ENCODE measurements at regions of chr4 and their contacts with region 1.

Region 1: DNA sequence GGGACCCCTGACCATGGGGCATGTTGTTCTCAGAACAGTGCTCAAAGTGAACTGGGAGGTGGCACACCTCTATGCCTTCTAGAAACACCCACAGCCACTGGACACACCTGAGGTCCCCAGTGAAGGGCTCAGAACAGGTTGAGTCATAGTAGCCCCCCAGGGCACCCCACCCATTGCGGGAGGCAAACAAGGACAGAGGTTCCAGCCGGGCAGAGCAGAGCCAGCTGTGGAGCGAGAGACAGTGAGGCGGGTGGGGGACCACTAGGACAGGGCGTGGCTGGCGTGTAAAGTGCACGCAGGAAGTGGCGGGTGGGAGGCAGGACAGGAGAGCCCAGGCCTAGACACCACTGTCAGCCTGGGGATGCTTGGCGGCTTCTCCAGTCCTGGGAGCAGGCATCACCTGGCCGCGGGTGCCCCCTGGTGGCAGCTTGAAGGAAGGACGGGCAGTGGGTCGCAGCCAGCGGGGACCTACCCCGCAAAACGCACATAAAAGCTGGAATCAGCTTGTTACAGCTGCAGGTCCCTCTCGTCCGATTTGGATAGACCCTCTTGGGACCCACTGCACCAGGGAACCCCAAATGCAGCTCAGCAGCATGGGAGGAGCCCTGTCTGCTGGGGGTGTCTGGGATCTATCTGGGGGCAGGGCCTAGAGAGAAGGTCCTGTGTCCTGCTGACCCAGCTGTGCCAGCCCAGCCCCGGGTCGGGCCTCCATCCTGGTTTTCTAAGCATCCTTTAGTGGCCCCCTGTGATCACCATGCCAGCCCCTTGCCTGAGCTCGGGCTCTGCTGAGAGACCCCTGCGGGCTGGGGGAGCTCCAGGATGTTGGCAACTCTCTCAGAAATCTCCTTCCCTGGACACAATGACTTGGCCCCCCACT is 57.6 kb downstream of the WFS1 start:
- DNase-seq: peak; percentile 94
- H3K4me3 ChIP-seq: peak overlapping the region in 1 of 2 experiments; percentile 55; a peak in 1 of 4 replicates
- H3K27ac ChIP-seq: no peak overlapping the region
- H3K4me1 ChIP-seq: peaks cover 0 to 3% of the 10 kb centered on the region in 2 experiments; a peak in 1 of 4 replicates
- H3K27me3 ChIP-seq: no peaks in the 10 kb centered on the region
- CTCF ChIP-seq: peak; percentile 81
- EP300 ChIP-seq: no peak
- RAD21 ChIP-seq: peak; percentile 99

Region 2: GRCh38 chr4:5955201-5955821 is 372.0 kb before region 1 on chr4:
- CTCF ChIA-PET with region 1: no interaction called
- POLR2A ChIA-PET with region 1: no interaction called
- DNase-seq: peak; percentile 57
- H3K4me3 ChIP-seq: no peak overlapping the region
- H3K27ac ChIP-seq: peak overlapping the region in 1 of 2 experiments; percentile 29; a peak in 2 of 4 replicates
- H3K4me1 ChIP-seq: peaks cover 0 to 37% of the 10 kb centered on the region in 2 experiments; a peak in 1 of 4 replicates
- H3K27me3 ChIP-seq: no peaks in the 10 kb centered on the region
- CTCF ChIP-seq: no peak
- EP300 ChIP-seq: no peak
- RAD21 ChIP-seq: no peak

Region 3: DNA sequence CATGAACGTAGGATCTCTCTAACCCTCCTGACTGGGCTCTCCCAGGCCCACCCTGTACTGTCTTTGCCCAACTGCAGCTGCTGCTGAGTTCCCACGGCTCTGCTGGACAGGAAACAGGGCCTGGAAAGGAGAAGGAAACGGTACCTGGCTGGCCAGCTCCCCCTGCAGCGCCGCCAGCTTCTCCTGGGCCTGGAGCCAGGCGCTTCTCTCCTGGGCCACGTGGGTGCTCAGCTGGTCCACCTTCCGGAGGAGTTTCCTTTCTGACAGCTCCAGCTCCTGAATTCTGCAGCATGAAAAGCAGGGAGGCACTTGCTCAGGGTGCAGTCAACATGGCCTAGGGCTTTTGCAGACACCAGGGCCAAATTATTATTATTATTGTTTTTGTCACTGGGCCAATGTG is 315.6 kb before region 1 on chr4:
- CTCF ChIA-PET with region 1: interaction called, 10 read pairs
- POLR2A ChIA-PET with region 1: no interaction called
- DNase-seq: peak; percentile 73
- H3K4me3 ChIP-seq: no peak overlapping the region
- H3K27ac ChIP-seq: no peak overlapping the region; a peak in 1 of 4 replicates
- H3K4me1 ChIP-seq: peaks cover 0 to 9% of the 10 kb centered on the region in 2 experiments; a peak in 1 of 4 replicates
- H3K27me3 ChIP-seq: no peaks in the 10 kb centered on the region
- CTCF ChIP-seq: no peak
- EP300 ChIP-seq: no peak
- RAD21 ChIP-seq: no peak

Region 4: GRCh38 chr4:6200011-6200921 is 127.0 kb before region 1 on chr4 and contains the start of gene JAKMIP1:
- CTCF ChIA-PET with region 1: interaction called, 10 read pairs
- POLR2A ChIA-PET with region 1: interaction called, 3 read pairs
- DNase-seq: peak; percentile 99
- H3K4me3 ChIP-seq: peak within 1 kb of the TSS; percentile 37 to 54; a peak in 3 of 4 replicates
- H3K27ac ChIP-seq: peak within 1 kb of the TSS in 1 of 2 experiments; percentile 91; a peak in 2 of 4 replicates
- H3K4me1 ChIP-seq: peaks cover 0 to 39% of the 10 kb centered on the region in 2 experiments; a peak in 1 of 4 replicates
- H3K27me3 ChIP-seq: no peaks in the 10 kb centered on the region
- CTCF ChIP-seq: no peak
- EP300 ChIP-seq: no peak
- RAD21 ChIP-seq: no peak
- polyA plus RNA-seq, gene JAKMIP1: 0.54 and 1.0 TPM in 2 replicates

Region 5: DNA sequence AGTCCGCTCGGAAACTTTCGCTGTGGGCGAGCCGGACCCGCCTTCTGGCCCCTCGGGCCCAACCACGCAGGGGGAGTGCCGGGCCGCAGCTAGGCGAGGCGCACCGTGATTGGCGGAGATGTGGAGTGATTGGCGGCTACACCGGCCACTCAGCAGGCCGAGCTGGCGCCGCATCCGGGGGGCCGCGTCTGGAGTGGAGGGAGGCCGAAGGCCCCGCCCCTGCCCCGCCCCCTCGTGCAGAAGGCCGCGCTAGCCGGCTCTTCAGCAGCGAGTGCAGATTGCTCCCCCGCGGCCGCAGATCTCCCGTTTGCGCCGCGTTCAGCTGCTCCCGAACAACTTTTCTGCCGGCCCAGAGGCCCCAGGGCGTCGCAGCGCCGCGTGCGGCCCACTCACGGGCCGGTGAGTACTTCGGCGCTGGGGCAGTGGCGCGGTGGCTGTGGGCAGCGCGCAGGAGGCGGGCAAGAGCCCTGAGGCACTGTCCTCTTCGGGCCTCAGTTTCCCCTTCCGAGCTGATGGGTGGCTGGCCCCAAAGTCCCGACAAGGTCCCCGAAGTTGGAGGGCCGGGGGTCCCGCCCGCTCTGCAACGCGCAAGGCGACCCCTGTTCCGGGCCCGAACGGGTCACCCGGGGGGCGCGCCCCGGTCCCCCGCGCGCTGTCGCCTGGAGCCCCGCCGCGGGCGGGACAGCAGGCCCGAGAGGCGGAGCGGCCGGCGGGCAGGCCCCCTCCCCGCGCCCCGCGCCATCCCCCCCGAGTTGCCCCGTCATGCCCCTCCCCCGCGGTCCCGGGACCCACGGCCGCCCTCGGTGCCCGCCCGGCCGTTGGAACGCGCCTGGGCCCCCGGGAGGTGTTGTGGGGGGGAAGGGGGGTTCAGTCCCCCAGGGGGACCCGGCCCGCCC is 57.4 kb before region 1 on chr4 and contains the start of gene WFS1:
- CTCF ChIA-PET with region 1: interaction called, 1,048 read pairs
- POLR2A ChIA-PET with region 1: interaction called, 3 read pairs
- DNase-seq: peak; percentile 100
- H3K4me3 ChIP-seq: peak within 1 kb of the TSS; percentile 82 to 97
- H3K27ac ChIP-seq: peak within 1 kb of the TSS in 1 of 2 experiments; percentile 75; a peak in 2 of 4 replicates
- H3K4me1 ChIP-seq: peaks cover 7 to 45% of the 10 kb centered on the region in 2 experiments; a peak in 3 of 4 replicates
- H3K27me3 ChIP-seq: no peaks in the 10 kb centered on the region
- CTCF ChIP-seq: no peak
- EP300 ChIP-seq: no peak
- RAD21 ChIP-seq: no peak
- polyA plus RNA-seq, gene WFS1: 15.8 and 18.7 TPM in 2 replicates

Region 6: GRCh38 chr4:6343950-6344408 is 16.7 kb after region 1 on chr4:
- CTCF ChIA-PET with region 1: interaction called, 123 read pairs
- POLR2A ChIA-PET with region 1: no interaction called
- DNase-seq: no peak
- H3K4me3 ChIP-seq: no peak overlapping the region
- H3K27ac ChIP-seq: no peak overlapping the region
- H3K4me1 ChIP-seq: no peaks in the 10 kb centered on the region
- H3K27me3 ChIP-seq: no peaks in the 10 kb centered on the region
- CTCF ChIP-seq: no peak
- EP300 ChIP-seq: no peak
- RAD21 ChIP-seq: no peak

Region 7: GRCh38 chr4:6427439-6428090 is 100.3 kb after region 1 on chr4:
- CTCF ChIA-PET with region 1: interaction called, 19 read pairs
- POLR2A ChIA-PET with region 1: no interaction called
- DNase-seq: no peak
- H3K4me3 ChIP-seq: no peak overlapping the region
- H3K27ac ChIP-seq: no peak overlapping the region
- H3K4me1 ChIP-seq: no peaks in the 10 kb centered on the region; a peak in 1 of 4 replicates
- H3K27me3 ChIP-seq: no peaks in the 10 kb centered on the region
- CTCF ChIP-seq: no peak
- EP300 ChIP-seq: no peak
- RAD21 ChIP-seq: peak; percentile 45